ENCODE measurements at regions of chr16 and their contacts with region 1.

Region 1: GRCh38 chr16:15599303-15600070 is 43.5 kb downstream of the MARF1 start:
- DNase-seq: no peak
- H3K4me3 ChIP-seq: no peak overlapping the region
- H3K27ac ChIP-seq: no peak overlapping the region
- H3K4me1 ChIP-seq: no peaks in the 10 kb centered on the region
- H3K27me3 ChIP-seq: no peaks in the 10 kb centered on the region
- CTCF ChIP-seq: no peak

Region 2: DNA sequence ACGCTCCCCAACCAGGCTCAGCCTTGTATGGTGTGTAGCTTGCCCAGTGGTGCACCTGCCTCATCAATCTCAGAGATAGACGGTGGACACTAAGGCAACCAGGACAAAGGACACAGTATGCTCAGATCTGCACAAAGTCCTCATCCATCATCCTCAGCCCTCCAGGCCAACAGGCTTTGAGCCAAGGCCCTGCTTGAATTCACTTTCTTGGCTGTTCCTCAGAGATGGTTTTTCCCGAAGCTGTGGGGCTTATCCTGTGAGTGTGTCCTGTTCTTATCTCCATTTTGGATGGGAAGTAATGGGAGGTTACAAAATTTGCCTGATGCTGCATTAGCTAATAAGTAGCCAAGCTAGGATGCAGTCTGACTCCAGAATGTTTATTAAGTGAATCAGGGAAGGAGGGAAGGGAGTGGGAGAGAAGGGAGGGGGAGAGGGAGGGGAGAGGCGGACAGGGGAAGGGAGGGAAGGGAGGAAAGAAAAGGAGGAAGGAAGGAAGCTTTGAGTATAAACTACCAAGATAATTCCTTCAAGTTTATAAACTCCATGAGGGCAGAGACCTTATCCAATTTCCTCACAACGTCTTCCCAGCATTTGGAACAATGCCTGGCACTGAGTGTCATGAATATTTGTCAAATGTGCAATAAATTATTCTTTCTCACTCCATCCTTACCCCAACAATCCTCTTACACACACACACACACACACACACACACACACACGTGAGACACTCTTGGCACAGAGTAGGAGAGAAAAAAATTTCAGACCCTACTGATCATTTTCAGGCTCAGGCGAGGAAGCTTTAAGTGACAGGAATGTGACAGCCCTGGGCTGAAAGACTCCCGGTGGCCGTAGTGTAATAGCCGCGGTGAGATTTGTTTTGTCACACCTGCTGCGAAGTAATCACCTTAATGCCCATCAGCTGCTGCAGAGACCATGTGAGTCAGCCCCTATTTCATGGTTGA is 80.8 kb before region 1 on chr16:
- CTCF ChIA-PET with region 1: no interaction called
- POLR2A ChIA-PET with region 1: interaction called, 16 read pairs
- intact Hi-C with region 1: no loop called
- DNase-seq: peak; percentile 28
- H3K4me3 ChIP-seq: no peak overlapping the region
- H3K27ac ChIP-seq: no peak overlapping the region
- H3K4me1 ChIP-seq: no peaks in the 10 kb centered on the region
- H3K27me3 ChIP-seq: no peaks in the 10 kb centered on the region
- CTCF ChIP-seq: no peak